GM10248 (cell line): ENCODE measurements at regions of chr1 and their contacts with region 1.

Region 1: GRCh38 chr1:161225534-161226319 is at the start of gene TOMM40L:
- DNase-seq: peak; percentile 94
- CTCF ChIP-seq: peak; percentile 58

Region 2: DNA sequence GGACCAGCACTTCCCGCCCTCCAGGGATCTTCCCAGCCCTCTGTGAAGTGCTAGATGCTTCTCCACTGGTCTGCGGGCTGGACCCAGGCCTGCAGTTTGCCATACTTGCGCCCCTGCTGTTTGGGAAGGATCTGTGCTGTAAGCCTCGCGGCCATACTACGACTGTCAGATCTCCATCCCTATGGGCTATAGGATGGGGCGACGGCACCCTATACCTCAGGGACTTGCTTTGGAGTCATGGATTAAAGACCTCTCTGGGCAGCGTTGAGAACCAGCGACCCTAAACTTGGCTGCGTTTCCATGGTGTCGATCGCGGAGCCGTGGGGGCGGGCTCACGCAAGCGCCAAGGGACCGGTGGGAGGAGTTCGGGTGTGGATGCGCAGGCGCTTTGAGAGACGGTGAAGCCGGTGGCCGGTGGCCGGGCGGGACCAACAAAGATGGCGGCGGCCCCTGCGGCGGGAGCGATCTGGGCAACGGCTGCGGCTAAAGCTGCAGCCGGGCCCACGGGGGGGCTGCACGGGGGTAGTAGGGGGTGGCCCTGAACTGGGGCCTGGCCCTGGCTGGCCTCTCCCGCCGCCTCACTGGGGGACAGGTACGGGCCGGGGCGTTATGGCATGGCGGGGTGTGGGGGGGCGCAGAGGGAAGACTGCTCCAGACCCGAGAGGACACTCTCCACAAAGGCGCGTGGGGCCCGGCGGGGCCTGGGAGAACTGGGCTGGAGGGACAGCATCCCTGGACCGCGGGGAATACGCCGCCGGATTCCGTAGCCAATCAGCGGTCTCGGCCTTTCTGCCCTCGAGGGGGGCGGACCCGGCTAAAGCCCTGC is 66.4 kb before region 1 on chr1 and contains the start of gene USP21:
- CTCF ChIA-PET with region 1: no interaction called
- POLR2A ChIA-PET with region 1: no interaction called
- DNase-seq: peak; percentile 96
- CTCF ChIP-seq: no peak

Region 3: GRCh38 chr1:161192476-161193465 is 33.0 kb before region 1 on chr1:
- CTCF ChIA-PET with region 1: interaction called, 18 read pairs
- POLR2A ChIA-PET with region 1: interaction called, 3 read pairs
- DNase-seq: peak; percentile 83
- CTCF ChIP-seq: peak; percentile 94

Region 4: DNA sequence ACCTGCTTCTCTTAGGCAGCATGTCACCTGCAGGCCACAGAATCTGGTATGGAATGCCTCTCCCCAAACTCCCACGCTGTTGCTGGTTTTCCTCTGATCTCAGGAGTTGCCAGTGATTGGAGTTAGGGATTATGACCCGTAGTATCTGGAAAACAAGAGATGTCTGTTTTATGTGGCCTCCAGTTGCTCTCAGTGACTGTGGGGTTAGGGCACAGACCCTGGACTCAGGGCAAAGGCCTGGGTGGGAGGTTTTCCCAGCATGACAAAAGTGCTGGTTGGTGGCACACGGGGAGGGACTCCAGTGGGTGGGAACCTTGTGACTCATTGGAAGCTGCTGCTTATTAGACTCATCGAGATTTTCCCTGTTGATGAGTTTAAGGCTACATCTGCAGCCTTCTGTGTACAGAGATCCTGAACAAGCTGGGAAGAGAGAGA is 12.3 kb after region 1 on chr1 and contains the start of gene NR1I3:
- CTCF ChIA-PET with region 1: interaction called, 44 read pairs
- POLR2A ChIA-PET with region 1: interaction called, 8 read pairs
- DNase-seq: no peak
- CTCF ChIP-seq: no peak

Region 5: DNA sequence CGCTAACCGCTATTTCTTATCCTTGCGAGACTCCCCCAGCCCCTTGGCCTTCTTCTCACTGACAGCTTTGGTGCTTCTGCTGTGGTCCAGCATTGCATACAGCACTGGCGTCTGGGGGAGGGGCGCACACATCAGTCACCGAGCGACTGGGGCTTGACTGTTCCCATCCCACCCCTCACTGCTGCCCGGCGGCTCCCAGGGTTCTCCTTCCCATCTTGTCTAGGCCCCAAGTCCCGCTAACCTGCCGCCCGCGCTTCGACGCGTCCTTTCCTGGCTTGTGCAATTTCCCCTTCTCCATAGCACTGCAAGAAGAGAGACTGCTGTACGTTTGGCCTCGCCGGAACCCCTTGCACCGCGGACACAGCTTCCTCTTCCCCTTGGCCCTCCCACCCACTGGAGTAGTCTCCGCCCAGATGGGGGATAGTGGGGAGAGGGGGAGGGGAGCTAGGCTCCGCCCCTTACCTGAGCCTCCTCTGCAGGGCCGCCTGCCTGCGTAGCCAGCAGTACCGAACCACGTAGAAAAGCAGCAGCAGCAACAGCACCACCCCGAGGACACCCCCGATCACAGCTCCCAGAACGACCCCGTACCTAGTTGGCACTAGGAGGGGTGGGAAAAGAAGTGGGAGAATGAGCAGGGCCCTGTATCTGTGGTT is 80.3 kb after region 1 on chr1:
- CTCF ChIA-PET with region 1: interaction called, 24 read pairs
- POLR2A ChIA-PET with region 1: interaction called, 3 read pairs
- DNase-seq: peak; percentile 89
- CTCF ChIP-seq: peak; percentile 46

Region 6: GRCh38 chr1:161374373-161374772 is 148.6 kb after region 1 on chr1:
- CTCF ChIA-PET with region 1: interaction called, 195 read pairs
- POLR2A ChIA-PET with region 1: no interaction called
- DNase-seq: no peak
- CTCF ChIP-seq: peak; percentile 8